Heart right ventricle (tissue), 16 donors: ENCODE measurements at regions of chr12 and their contacts with region 1.

Region 1: GRCh38 chr12:94532490-94533422 is 73.1 kb upstream of the CEP83 start:
- DNase-seq: peak; percentile 68 to 70
- ATAC-seq: peak; percentile 75 to 92 (median 83)
- H3K4me3 ChIP-seq: no peak overlapping the region
- H3K27ac ChIP-seq: no peak overlapping the region
- H3K4me1 ChIP-seq: peaks cover 0 to 4% (median 0%) of the 10 kb centered on the region in 9 donors
- H3K27me3 ChIP-seq: peaks cover 0 to 3% (median 0%) of the 10 kb centered on the region in 7 donors
- CTCF ChIP-seq: peak; percentile 55 to 91 (median 85)

Region 2: DNA sequence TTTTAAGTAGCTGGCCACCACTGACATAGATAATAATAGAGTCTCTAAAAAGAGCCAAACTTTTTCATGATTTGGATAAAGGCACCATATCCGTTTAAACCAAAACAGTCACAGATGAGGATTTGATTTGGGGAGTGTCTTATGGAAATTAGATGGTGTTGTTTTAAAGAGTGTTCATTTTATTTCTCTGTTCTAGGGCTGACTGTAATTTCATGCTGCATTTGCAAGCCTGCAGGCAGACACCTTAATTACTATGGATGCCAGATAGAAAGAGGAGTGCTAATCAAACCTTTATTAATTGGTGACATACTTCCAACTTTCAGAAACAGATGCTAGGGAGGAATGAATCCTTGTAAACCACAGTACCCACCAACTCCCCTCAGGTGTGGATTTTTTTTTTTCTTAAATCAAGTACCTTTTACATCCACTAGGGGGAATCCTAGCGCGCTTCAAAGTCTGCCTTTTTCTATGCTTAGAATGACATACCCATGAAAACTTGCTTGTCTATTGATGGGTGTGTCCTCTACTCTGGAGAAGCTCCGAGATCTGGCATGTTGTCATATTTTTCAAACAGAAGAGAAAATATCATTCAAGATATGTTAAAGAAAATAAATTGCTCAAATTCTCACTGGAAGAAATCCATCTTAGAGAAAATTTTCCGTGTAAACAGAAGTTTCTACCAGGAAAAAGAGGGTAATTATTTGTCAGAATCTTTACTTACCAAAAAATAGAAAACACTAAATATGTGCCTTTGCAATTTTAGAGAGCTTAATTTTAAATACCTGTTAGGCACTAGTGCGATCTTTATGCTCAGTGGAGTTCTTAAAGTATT is 398.6 kb before region 1 on chr12:
- intact Hi-C with region 1: loop called in 4 of 10 experiments (anchors 1 to 5 kb)
- DNase-seq: peak in 1 of 2 donors; percentile 21
- ATAC-seq: peak in 7 of 8 donors; percentile 26 to 82 (median 74)
- H3K4me3 ChIP-seq: no peak overlapping the region
- H3K27ac ChIP-seq: no peak overlapping the region
- H3K4me1 ChIP-seq: peaks cover 0 to 3% (median 0%) of the 10 kb centered on the region in 9 donors
- H3K27me3 ChIP-seq: peaks cover 0 to 9% (median 1%) of the 10 kb centered on the region in 7 donors
- CTCF ChIP-seq: peak; percentile 76 to 89 (median 83)

Region 3: DNA sequence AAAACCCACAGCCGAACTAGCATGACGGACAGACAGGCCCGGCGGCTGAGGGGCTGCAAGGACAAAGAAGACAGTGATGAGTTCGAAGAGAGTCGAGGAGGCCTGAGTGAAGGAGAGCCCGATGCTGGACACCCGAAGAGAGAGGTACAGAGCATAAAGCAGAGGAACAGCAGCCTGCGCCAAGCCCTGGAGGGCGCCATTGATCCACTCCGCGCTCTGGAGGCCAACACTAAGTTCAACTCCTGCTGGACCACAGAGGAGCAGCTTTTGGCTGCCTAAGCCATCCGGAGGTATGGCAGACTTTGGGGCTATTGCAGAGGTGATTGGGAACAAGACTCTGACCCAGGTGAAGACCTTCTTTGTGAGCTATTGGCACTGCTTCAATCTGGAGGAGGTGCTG is 392.2 kb before region 1 on chr12:
- intact Hi-C with region 1: loop called in 9 of 10 experiments (anchors 2 to 5 kb)
- DNase-seq: peak in 1 of 2 donors; percentile 23
- ATAC-seq: peak in 2 of 8 donors; percentile 33 to 34
- H3K4me3 ChIP-seq: no peak overlapping the region
- H3K27ac ChIP-seq: no peak overlapping the region
- H3K4me1 ChIP-seq: peaks cover 0 to 2% (median 0%) of the 10 kb centered on the region in 9 donors
- H3K27me3 ChIP-seq: peaks cover 0 to 5% (median 0%) of the 10 kb centered on the region in 7 donors
- CTCF ChIP-seq: peak in 5 of 9 donors; percentile 17 to 38 (median 23)

Region 4: GRCh38 chr12:94326727-94327126 is 206.0 kb before region 1 on chr12:
- intact Hi-C with region 1: loop called in 5 of 10 experiments (anchors 5 to 10 kb)
- DNase-seq: no peak
- ATAC-seq: no peak
- H3K4me3 ChIP-seq: no peak overlapping the region
- H3K27ac ChIP-seq: no peak overlapping the region
- H3K4me1 ChIP-seq: peaks cover 0 to 4% (median 0%) of the 10 kb centered on the region in 9 donors
- H3K27me3 ChIP-seq: no peaks in the 10 kb centered on the region
- CTCF ChIP-seq: no peak

Region 5: GRCh38 chr12:94336211-94336925 is 196.4 kb before region 1 on chr12:
- intact Hi-C with region 1: loop called in 2 of 10 experiments (anchors 10 kb)
- DNase-seq: no peak
- ATAC-seq: peak in 3 of 8 donors; percentile 51 to 55 (median 51)
- H3K4me3 ChIP-seq: no peak overlapping the region
- H3K27ac ChIP-seq: peak overlapping the region in 1 of 10 donors; percentile 10
- H3K4me1 ChIP-seq: peaks cover 0 to 21% (median 6%) of the 10 kb centered on the region in 9 donors
- H3K27me3 ChIP-seq: no peaks in the 10 kb centered on the region
- CTCF ChIP-seq: no peak

Region 6: DNA sequence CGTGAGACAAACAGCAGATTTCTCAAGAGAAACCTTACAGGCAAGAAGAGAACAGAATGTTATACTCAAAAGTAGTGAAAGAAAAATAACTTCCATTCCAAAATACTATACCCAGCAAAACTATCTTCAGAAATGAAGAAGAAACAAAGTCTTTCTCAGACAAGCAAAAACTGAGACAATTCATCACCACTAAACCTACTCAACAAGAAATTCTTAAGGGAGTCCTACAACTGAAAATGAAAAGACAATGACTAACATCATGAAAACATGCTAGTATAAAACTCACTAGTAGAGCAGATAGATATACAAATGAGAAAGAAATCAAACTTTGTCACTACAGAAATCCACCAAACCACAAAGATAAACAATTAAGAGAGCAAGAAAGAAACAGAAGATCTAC is 179.6 kb before region 1 on chr12:
- intact Hi-C with region 1: no loop called
- DNase-seq: no peak
- ATAC-seq: no peak
- H3K4me3 ChIP-seq: no peak overlapping the region
- H3K27ac ChIP-seq: no peak overlapping the region
- H3K4me1 ChIP-seq: no peaks in the 10 kb centered on the region
- H3K27me3 ChIP-seq: no peaks in the 10 kb centered on the region
- CTCF ChIP-seq: no peak

Region 7: GRCh38 chr12:94628819-94629472 is 96.2 kb after region 1 on chr12:
- intact Hi-C with region 1: no loop called
- DNase-seq: no peak
- ATAC-seq: no peak
- H3K4me3 ChIP-seq: no peak overlapping the region
- H3K27ac ChIP-seq: no peak overlapping the region
- H3K4me1 ChIP-seq: peaks cover 0 to 9% (median 0%) of the 10 kb centered on the region in 9 donors
- H3K27me3 ChIP-seq: no peaks in the 10 kb centered on the region
- CTCF ChIP-seq: no peak